CD8-positive, alpha-beta T cell (primary cell): ENCODE measurements at regions of chr2 and their contacts with region 1.

Region 1: DNA sequence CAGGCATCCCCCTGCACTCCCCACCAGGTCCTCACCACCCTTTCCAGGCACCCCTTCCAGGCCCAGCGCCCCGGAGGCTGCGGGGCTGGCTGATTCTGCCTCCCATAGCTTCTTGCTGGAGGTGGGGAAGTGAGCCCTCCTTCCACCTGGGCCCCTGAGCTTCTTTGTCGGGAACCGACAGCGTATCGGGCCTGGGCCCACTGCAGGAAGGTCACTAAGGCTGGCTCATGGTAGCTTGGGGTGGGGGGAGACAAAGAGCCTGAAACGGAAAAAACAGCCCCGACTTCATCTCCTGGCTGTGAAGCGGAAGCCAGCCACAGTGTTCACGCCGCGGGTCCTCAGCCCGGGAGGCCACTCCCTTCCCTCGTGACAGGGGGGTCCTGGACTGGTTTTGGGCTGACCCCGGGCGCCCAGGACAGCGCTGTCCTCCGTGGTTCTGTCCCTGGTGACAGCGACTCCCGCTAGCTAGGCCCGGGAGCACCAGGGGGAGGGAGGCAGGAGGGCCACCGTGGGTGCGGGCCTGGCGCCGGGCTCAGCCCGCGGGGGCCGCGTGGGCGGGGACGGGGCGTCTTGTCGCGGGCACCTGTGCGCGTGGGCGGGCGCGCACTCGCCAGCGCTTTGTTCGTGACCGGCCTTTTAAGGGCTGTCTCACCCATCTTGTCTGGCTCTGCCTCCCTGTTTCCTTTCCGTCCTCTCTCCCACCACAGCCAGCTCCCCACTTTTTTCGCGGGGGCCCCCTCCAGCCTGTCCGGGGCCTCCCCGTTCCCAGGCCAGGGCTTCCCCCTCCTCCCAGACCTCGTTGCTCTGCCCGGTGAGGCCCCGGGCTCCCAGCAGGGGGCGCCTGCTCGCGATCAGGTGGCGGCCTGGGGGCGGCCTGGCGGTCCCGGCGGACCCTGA is 64.9 kb downstream of the DNMT3A start:
- DNase-seq: peak; percentile 47 to 87 (median 74)
- ATAC-seq: peak; percentile 35
- H3K4me3 ChIP-seq: peak overlapping the region; percentile 55 to 57
- H3K4me3 Mint-ChIP-seq: peak overlapping the region; percentile 76
- H3K27ac ChIP-seq: peak overlapping the region; percentile 76 to 95
- H3K27ac Mint-ChIP-seq: peak overlapping the region; percentile 99
- H3K4me1 ChIP-seq: peaks cover 85% of the 10 kb centered on the region
- H3K4me1 Mint-ChIP-seq: peaks cover 81% of the 10 kb centered on the region
- H3K27me3 ChIP-seq: no peaks in the 10 kb centered on the region
- H3K27me3 Mint-ChIP-seq: no peaks in the 10 kb centered on the region
- CTCF ChIP-seq: peak; percentile 91

Region 2: DNA sequence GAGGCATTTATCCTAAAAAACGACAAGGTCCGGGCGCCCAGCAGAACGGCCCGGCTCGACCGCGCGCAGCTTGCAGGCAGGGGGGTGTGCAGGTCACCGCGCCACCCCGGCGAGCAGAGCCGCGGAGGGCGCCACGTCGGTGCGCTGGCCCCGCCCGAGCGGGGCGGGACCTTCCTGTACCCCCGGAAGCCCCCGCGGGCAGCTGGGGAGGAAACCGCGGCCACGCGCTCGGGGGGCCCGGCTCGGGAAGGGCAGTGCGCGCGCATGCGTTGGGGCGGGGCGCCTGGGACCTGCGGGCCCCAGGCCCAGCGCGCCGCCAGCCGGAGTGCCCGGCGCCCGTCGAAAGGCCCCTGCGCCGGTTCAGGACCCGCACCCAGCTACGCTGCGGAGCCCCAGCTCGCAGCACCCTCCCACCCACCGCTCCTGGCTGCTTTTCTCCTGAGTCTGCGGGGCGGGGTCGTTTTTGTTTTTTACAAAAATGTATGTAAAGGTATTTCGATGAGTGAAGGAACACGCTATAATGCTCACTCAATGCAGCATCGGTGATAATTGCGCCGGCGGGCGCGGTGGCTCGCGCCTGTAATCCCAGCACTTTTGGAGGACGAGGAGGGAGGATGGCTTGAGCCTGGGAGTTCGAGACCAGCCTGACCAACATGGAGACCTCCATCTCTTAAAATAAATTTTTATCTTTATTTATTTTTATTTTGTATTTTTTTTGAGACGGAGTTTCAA is 60.7 kb before region 1 on chr2:
- CTCF ChIA-PET with region 1: interaction called, 4 read pairs
- POLR2A ChIA-PET with region 1: interaction called, 12 read pairs
- intact Hi-C with region 1: loop called in 1 of 2 experiments (anchors 10 kb)
- DNase-seq: peak; percentile 64 to 96 (median 88)
- ATAC-seq: peak; percentile 95
- H3K4me3 ChIP-seq: peak overlapping the region; percentile 59 to 72
- H3K4me3 Mint-ChIP-seq: peak overlapping the region; percentile 77
- H3K27ac ChIP-seq: peak overlapping the region; percentile 68 to 72
- H3K27ac Mint-ChIP-seq: peak overlapping the region; percentile 80
- H3K4me1 ChIP-seq: peaks cover 7% of the 10 kb centered on the region
- H3K4me1 Mint-ChIP-seq: peaks cover 10% of the 10 kb centered on the region
- H3K27me3 ChIP-seq: no peaks in the 10 kb centered on the region
- H3K27me3 Mint-ChIP-seq: no peaks in the 10 kb centered on the region
- CTCF ChIP-seq: no peak

Region 3: GRCh38 chr2:25294573-25295462 is 18.0 kb after region 1 on chr2:
- CTCF ChIA-PET with region 1: interaction called, 17 read pairs
- POLR2A ChIA-PET with region 1: interaction called, 39 read pairs
- intact Hi-C with region 1: loop called (anchors 1 to 2 kb)
- DNase-seq: peak; percentile 49 to 91 (median 85)
- ATAC-seq: peak; percentile 81
- H3K4me3 ChIP-seq: peak overlapping the region; percentile 18 to 46
- H3K4me3 Mint-ChIP-seq: peak overlapping the region; percentile 79
- H3K27ac ChIP-seq: peak overlapping the region; percentile 70 to 80
- H3K27ac Mint-ChIP-seq: peak overlapping the region; percentile 97
- H3K4me1 ChIP-seq: peaks cover 72% of the 10 kb centered on the region
- H3K4me1 Mint-ChIP-seq: peaks cover 59% of the 10 kb centered on the region
- H3K27me3 ChIP-seq: no peaks in the 10 kb centered on the region
- H3K27me3 Mint-ChIP-seq: no peaks in the 10 kb centered on the region
- CTCF ChIP-seq: no peak

Region 4: DNA sequence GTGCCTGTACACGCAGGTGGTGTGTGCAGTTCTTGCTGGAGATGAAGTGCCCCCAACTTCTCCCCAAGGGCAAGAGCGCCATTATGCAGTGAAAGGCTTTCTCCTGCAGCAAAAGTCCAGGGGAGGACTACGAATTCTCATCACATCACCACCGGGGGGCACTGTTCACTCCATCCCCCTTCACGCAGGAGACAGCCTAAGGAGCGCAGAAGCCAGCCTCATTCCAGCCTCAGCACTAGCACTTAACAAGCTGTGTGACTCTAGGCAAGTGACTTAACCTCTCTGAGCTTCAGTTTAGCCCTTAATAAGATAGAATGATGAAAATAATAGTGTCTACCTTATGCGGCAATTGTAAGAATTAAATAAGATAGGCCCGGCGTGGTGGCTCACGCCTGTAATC is 32.6 kb after region 1 on chr2:
- CTCF ChIA-PET with region 1: interaction called, 29 read pairs
- POLR2A ChIA-PET with region 1: interaction called, 9 read pairs
- intact Hi-C with region 1: loop called in 1 of 2 experiments (anchors 5 kb)
- DNase-seq: peak; percentile 40 to 80 (median 75)
- ATAC-seq: peak; percentile 39
- H3K4me3 ChIP-seq: no peak overlapping the region
- H3K4me3 Mint-ChIP-seq: peak overlapping the region; percentile 11
- H3K27ac ChIP-seq: no peak overlapping the region
- H3K27ac Mint-ChIP-seq: peak overlapping the region; percentile 79
- H3K4me1 ChIP-seq: peaks cover 90% of the 10 kb centered on the region
- H3K4me1 Mint-ChIP-seq: peaks cover 85% of the 10 kb centered on the region
- H3K27me3 ChIP-seq: no peaks in the 10 kb centered on the region
- H3K27me3 Mint-ChIP-seq: no peaks in the 10 kb centered on the region
- CTCF ChIP-seq: peak; percentile 51

Region 5: GRCh38 chr2:25342372-25343186 is 65.8 kb after region 1 on chr2:
- CTCF ChIA-PET with region 1: interaction called, 6 read pairs
- POLR2A ChIA-PET with region 1: interaction called, 8 read pairs
- intact Hi-C with region 1: loop called (anchors 1 to 2 kb)
- DNase-seq: peak; percentile 62 to 91 (median 80)
- ATAC-seq: peak; percentile 85
- H3K4me3 ChIP-seq: peak overlapping the region; percentile 22 to 53
- H3K4me3 Mint-ChIP-seq: peak overlapping the region; percentile 85
- H3K27ac ChIP-seq: no peak overlapping the region
- H3K27ac Mint-ChIP-seq: peak overlapping the region; percentile 77
- H3K4me1 ChIP-seq: peaks cover 42% of the 10 kb centered on the region
- H3K4me1 Mint-ChIP-seq: peaks cover 33% of the 10 kb centered on the region
- H3K27me3 ChIP-seq: no peaks in the 10 kb centered on the region
- H3K27me3 Mint-ChIP-seq: no peaks in the 10 kb centered on the region
- CTCF ChIP-seq: peak; percentile 87

Region 6: GRCh38 chr2:25376750-25377621 is 100.2 kb after region 1 on chr2:
- CTCF ChIA-PET with region 1: interaction called, 5 read pairs
- POLR2A ChIA-PET with region 1: interaction called, 4 read pairs
- intact Hi-C with region 1: loop called in 1 of 2 experiments (anchors 5 kb)
- DNase-seq: peak; percentile 83 to 98 (median 92)
- ATAC-seq: peak; percentile 97
- H3K4me3 ChIP-seq: peak overlapping the region; percentile 11 to 36
- H3K4me3 Mint-ChIP-seq: peak overlapping the region; percentile 72
- H3K27ac ChIP-seq: peak overlapping the region; percentile 36 to 69
- H3K27ac Mint-ChIP-seq: peak overlapping the region; percentile 95
- H3K4me1 ChIP-seq: peaks cover 33% of the 10 kb centered on the region
- H3K4me1 Mint-ChIP-seq: peaks cover 35% of the 10 kb centered on the region
- H3K27me3 ChIP-seq: no peaks in the 10 kb centered on the region
- H3K27me3 Mint-ChIP-seq: no peaks in the 10 kb centered on the region
- CTCF ChIP-seq: peak; percentile 98

Region 7: DNA sequence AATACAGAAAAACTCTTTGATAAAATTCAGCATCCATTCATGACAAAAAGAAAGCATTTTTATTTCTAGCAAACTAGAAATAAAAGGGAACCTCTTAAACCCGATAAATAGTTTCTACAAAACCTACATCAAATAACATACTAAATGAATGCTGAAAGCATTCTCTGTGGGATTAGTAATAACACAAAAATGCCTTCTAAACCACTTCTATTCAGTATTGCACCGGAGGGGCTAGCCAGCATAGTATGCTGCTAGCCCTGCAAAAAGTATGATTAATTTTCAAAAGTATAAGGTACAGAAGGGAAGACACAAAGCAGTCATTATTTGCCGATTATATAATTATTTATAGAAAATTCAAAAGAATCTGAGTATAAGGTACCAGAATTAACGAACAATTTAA is 251.4 kb after region 1 on chr2:
- CTCF ChIA-PET with region 1: no interaction called
- POLR2A ChIA-PET with region 1: no interaction called
- intact Hi-C with region 1: no loop called
- DNase-seq: no peak
- ATAC-seq: no peak
- H3K4me3 ChIP-seq: no peak overlapping the region
- H3K4me3 Mint-ChIP-seq: no peak overlapping the region
- H3K27ac ChIP-seq: no peak overlapping the region
- H3K27ac Mint-ChIP-seq: no peak overlapping the region
- H3K4me1 ChIP-seq: no peaks in the 10 kb centered on the region
- H3K4me1 Mint-ChIP-seq: peaks cover 7% of the 10 kb centered on the region
- H3K27me3 ChIP-seq: no peaks in the 10 kb centered on the region
- H3K27me3 Mint-ChIP-seq: no peaks in the 10 kb centered on the region
- CTCF ChIP-seq: no peak